Activated CD4-positive, alpha-beta T cell treated with anti-CD3 and anti-CD28 coated beads, Interleukin-2, amount 10 ng/mL, durations not matched to agents 24 days and 14 days (primary cell): ENCODE measurements at regions of chr2 and their contacts with region 1.

Region 1: GRCh38 chr2:105873721-105874120 is 129.0 kb downstream of the NCK2 start:
- DNase-seq: peak; percentile 78
- H3K4me3 Mint-ChIP-seq: peak overlapping the region; percentile 59
- H3K27ac Mint-ChIP-seq: peak overlapping the region; percentile 84
- H3K4me1 Mint-ChIP-seq: peaks cover 74% of the 10 kb centered on the region
- H3K27me3 Mint-ChIP-seq: no peaks in the 10 kb centered on the region

Region 2: GRCh38 chr2:105235388-105236054 is 638.2 kb before region 1 on chr2:
- intact Hi-C with region 1: no loop called
- DNase-seq: peak; percentile 88
- H3K4me3 Mint-ChIP-seq: no peak overlapping the region
- H3K27ac Mint-ChIP-seq: no peak overlapping the region
- H3K4me1 Mint-ChIP-seq: peaks cover 8% of the 10 kb centered on the region
- H3K27me3 Mint-ChIP-seq: peaks cover 9% of the 10 kb centered on the region

Region 3: DNA sequence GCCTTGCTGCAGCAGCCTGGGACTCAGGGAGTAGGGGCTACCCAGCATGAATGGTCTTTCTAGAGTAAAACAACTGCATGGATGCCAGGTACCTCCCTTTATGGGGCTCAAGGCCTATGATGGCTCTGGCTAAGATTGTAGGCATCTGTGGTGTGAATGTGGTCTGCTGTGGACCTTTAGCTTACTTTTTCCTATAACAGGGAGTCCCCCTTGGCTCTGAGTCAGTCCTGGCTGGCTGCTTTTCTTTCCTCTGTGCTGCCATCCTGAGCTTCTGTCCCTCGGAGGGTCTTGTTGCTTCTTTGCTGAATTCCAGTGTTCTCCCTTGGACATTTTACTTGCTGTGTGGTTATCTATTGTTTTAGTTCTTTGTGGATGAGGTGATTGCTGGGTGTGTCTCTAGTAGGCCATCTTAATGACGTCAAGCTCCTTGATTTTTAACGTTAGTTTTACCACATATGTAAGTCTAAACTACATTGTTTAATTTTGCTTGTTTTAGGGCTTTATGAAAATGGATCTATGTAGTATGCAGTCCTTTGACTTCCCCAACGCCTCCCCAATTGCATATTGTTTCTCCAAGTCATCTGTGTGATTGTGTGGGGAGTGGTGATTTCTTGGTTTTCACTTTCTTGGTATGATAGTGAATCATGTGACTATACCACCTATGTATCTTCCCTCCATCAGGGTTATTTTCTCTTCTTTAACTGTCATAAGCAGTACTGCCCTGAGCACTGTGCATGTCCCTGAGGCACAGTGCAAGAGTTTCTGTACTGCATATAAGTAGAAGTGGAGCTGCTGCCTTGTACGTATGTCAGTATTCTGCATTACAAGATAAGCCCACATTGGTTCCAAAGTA is 36.7 kb before region 1 on chr2:
- intact Hi-C with region 1: loop called (anchors 1 kb)
- DNase-seq: no peak
- H3K4me3 Mint-ChIP-seq: peak overlapping the region; percentile 52
- H3K27ac Mint-ChIP-seq: peak overlapping the region; percentile 77
- H3K4me1 Mint-ChIP-seq: peaks cover 73% of the 10 kb centered on the region
- H3K27me3 Mint-ChIP-seq: no peaks in the 10 kb centered on the region

Region 4: GRCh38 chr2:105950521-105951383 is 77.0 kb after region 1 on chr2:
- intact Hi-C with region 1: loop called (anchors 5 kb)
- DNase-seq: no peak
- H3K4me3 Mint-ChIP-seq: no peak overlapping the region
- H3K27ac Mint-ChIP-seq: peak overlapping the region; percentile 57
- H3K4me1 Mint-ChIP-seq: peaks cover 24% of the 10 kb centered on the region
- H3K27me3 Mint-ChIP-seq: peaks cover 3% of the 10 kb centered on the region